ENCODE measurements at regions of chr3 and their contacts with region 1.

Region 1: DNA sequence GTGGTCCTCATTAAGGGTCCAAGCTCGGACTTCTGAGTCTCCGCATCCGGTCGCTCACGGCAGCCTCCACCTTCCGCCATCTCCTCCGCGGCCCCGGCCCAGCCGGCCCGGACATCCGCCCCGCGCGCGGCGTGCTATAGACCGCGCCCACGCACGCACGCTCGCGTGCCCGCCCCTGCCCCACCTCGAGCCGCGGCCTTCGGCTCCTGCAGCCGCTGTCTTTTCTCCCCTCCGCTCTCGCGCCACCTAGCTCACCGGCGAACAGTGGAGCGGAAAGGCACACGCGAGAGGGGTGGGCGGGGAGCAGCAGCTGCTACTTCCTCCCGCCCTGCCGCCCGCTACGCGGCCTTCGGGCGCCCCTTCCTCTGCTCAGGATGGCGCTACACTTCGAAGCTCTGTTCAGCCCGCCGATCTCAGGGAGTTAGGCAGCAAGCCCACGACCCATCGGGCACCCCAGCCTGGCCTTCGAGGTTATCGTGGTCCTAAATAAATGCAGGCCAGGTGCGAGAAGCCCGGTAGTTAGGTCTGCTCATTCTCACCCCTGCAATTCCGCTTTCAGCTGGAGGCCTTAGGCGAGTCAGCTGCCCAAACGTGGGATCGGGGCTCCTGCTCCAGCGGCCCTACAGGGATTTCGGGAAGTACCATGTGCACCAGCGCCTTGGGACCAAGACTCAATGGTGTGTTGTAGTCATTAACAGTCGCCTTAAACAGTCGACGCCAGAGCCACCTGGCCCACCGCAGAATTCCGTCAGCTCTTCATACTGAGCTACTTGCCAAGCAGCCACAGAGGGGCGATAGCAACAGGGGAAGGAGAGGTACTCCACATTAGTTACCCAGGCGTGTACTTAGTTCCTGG is at the start of gene USP4:
- DNase-seq: peak; percentile 87
- ATAC-seq: peak; percentile 96
- H3K4me3 ChIP-seq: peak within 1 kb of the TSS; percentile 87
- H3K27ac ChIP-seq: peak within 1 kb of the TSS; percentile 93
- H3K4me1 ChIP-seq: peaks cover 11% of the 10 kb centered on the region; the same call in 1 of the 2 replicates
- H3K27me3 ChIP-seq: no peaks in the 10 kb centered on the region
- CTCF ChIP-seq: peak; percentile 62
- POLR2A ChIP-seq: peak; percentile 71; the same call in 1 of the 2 replicates
- RAD21 ChIP-seq: peak; percentile 75
- total RNA-seq, gene USP4: 28.6 and 29.9 TPM in 2 replicates

Region 2: GRCh38 chr3:49158108-49158709 is 182.0 kb before region 1 on chr3:
- CTCF ChIA-PET with region 1: no interaction called
- POLR2A ChIA-PET with region 1: no interaction called
- dilution Hi-C with region 1: no loop called
- in situ Hi-C with region 1: no loop called
- intact Hi-C with region 1: no loop called
- DNase-seq: no peak
- ATAC-seq: no peak; the same call in 1 of the 2 replicates
- H3K4me3 ChIP-seq: no peak overlapping the region
- H3K27ac ChIP-seq: no peak overlapping the region
- H3K4me1 ChIP-seq: no peaks in the 10 kb centered on the region
- H3K27me3 ChIP-seq: no peaks in the 10 kb centered on the region
- CTCF ChIP-seq: 0 out of 2 replicates have a peak, but pooled peaks have one; percentile 6
- POLR2A ChIP-seq: no peak; the same call in 1 of the 2 replicates
- RAD21 ChIP-seq: no peak

Region 3: DNA sequence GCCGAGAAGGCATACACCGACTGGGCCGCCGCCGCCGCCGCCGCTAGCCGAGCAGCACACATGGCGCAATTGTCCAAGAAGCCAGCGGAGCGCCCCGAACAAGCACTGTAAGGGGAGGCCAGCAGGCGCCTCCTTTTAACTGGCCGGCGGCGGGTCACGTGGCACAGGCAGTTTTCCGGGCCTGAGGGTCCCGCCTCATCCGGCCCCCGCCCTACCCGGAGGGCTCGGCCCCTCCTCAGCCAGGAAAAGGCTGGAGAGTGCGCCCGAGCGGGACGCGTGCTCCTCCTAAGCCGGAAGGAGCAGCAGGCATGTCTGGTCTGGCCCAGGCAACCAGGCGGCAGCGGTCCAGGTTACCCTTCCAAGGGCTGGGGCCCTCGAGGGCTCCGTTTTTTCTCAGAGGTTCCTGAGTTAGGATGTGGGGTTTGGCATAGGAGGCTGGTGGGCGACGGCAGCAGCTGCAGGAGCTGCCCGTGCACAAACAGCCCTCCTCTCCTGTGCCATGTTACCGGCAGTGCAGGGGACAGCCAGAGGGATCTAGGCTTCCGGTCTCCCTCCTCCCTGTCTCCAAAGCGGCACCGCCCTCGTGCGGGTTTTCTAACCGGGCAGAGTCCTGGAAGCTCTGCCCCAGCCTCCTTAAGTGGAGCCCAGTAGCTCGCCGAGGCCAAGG is 18.2 kb after region 1 on chr3 and contains the start of gene GPX1:
- CTCF ChIA-PET with region 1: interaction called, 5 read pairs
- POLR2A ChIA-PET with region 1: no interaction called
- dilution Hi-C with region 1: no loop called
- in situ Hi-C with region 1: no loop called
- intact Hi-C with region 1: loop called (anchors 1 kb)
- DNase-seq: peak; percentile 94
- ATAC-seq: peak; percentile 83
- H3K4me3 ChIP-seq: peak within 1 kb of the TSS; percentile 67
- H3K27ac ChIP-seq: peak within 1 kb of the TSS; percentile 99
- H3K4me1 ChIP-seq: peaks cover 24% of the 10 kb centered on the region
- H3K27me3 ChIP-seq: no peaks in the 10 kb centered on the region
- CTCF ChIP-seq: no peak
- POLR2A ChIP-seq: peak; percentile 88
- RAD21 ChIP-seq: no peak
- total RNA-seq, gene GPX1: 126 and 128 TPM in 2 replicates

Region 4: DNA sequence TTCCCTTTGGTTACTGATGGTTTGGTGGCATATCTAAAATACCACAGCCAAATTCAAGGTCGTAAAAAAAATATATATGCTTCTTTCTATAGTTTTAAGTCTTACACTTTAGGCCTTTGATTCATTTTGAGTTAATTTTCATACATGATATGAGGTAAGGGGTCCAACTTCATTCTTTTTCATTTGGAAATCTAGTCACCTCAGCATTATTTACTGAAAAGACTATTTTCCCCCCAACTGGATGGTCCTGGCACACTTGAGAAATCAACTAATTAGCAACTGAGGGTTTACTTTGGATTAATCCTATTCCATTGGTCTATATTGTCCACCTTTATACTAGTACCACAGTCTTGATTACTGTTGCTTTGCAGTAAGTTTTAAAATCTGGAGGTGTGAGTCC is 45.4 kb after region 1 on chr3:
- CTCF ChIA-PET with region 1: no interaction called
- POLR2A ChIA-PET with region 1: no interaction called
- dilution Hi-C with region 1: no loop called
- in situ Hi-C with region 1: no loop called
- intact Hi-C with region 1: loop called (anchors 1 kb)
- DNase-seq: no peak
- ATAC-seq: no peak
- H3K4me3 ChIP-seq: no peak overlapping the region
- H3K27ac ChIP-seq: no peak overlapping the region
- H3K4me1 ChIP-seq: peaks cover 10% of the 10 kb centered on the region
- H3K27me3 ChIP-seq: no peaks in the 10 kb centered on the region
- CTCF ChIP-seq: no peak
- POLR2A ChIP-seq: no peak
- RAD21 ChIP-seq: no peak

Region 5: DNA sequence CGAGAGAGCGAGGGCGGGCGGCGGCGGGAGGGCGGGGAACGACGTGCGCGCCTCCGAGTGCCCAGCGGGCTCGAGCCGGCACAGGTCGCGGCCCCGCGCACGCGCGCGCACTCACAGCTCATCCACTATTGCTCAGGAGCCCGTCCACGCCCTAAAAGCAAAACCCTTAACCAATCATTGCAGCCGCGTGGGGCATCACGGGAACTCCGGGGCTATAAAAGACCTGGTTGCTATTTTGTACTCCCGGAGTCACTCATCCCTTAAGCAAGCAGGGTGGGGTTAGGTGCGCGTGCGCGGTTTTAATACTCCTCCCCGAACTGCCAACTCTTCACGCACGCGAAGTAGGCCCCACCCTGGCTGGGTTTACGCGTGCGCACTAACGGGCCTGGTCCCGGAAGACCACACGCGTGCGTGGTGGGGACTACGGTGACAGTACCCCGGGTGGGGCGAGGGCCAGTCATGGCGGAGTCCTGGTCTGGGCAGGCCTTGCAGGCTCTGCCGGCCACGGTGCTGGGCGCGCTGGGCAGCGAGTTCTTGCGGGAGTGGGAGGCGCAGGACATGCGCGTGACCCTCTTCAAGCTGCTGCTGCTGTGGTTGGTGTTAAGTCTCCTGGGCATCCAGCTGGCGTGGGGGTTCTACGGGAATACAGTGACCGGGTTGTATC is 71.9 kb after region 1 on chr3 and contains the starts of genes RHOA and TCTA:
- CTCF ChIA-PET with region 1: no interaction called
- POLR2A ChIA-PET with region 1: no interaction called
- dilution Hi-C with region 1: no loop called
- in situ Hi-C with region 1: no loop called
- intact Hi-C with region 1: loop called (anchors 2 kb)
- DNase-seq: peak; percentile 100
- ATAC-seq: peak; percentile 91
- H3K4me3 ChIP-seq: peak within 1 kb of the TSS; percentile 78
- H3K27ac ChIP-seq: peak within 1 kb of the TSS; percentile 96
- H3K4me1 ChIP-seq: peaks cover 9% of the 10 kb centered on the region
- H3K27me3 ChIP-seq: no peaks in the 10 kb centered on the region
- CTCF ChIP-seq: no peak
- POLR2A ChIP-seq: peak; percentile 97
- RAD21 ChIP-seq: no peak
- total RNA-seq, gene RHOA: 879 and 897 TPM in 2 replicates
- total RNA-seq, gene TCTA: 12.8 and 15.1 TPM in 2 replicates

Region 6: GRCh38 chr3:49445381-49445780 is 105.2 kb after region 1 on chr3:
- CTCF ChIA-PET with region 1: interaction called, 6 read pairs
- POLR2A ChIA-PET with region 1: interaction called, 7 read pairs
- dilution Hi-C with region 1: no loop called
- in situ Hi-C with region 1: loop called (anchors 5 kb)
- intact Hi-C with region 1: loop called (anchors 1 kb)
- DNase-seq: no peak
- ATAC-seq: no peak
- H3K4me3 ChIP-seq: no peak overlapping the region
- H3K27ac ChIP-seq: no peak overlapping the region
- H3K4me1 ChIP-seq: peaks cover 4% of the 10 kb centered on the region
- H3K27me3 ChIP-seq: no peaks in the 10 kb centered on the region
- CTCF ChIP-seq: no peak
- POLR2A ChIP-seq: no peak
- RAD21 ChIP-seq: no peak

Region 7: DNA sequence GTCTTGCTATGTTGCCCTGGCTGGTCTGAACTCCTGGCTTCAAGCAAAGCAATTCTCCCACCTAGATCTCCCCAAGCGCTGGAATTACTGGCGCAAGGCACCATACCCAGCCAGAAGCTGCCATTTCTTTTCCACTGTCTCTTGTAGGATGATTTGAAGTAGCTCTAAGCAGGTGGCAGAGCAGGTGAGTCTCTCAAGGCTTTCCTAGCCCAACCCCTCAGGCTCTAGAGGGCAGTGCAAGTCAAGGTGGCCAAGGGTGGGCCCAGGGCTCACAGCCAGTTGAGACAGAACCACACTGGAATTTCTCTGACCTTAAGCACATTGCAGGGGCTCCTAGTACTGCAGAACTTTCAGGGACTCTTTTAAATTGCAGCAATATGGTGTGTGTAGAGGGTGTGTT is 114.3 kb after region 1 on chr3:
- CTCF ChIA-PET with region 1: interaction called, 3 read pairs
- POLR2A ChIA-PET with region 1: no interaction called
- dilution Hi-C with region 1: no loop called
- in situ Hi-C with region 1: loop called (anchors 5 kb)
- intact Hi-C with region 1: loop called (anchors 1 kb)
- DNase-seq: no peak
- ATAC-seq: no peak
- H3K4me3 ChIP-seq: no peak overlapping the region
- H3K27ac ChIP-seq: no peak overlapping the region
- H3K4me1 ChIP-seq: peaks cover 8% of the 10 kb centered on the region
- H3K27me3 ChIP-seq: no peaks in the 10 kb centered on the region
- CTCF ChIP-seq: no peak
- POLR2A ChIP-seq: no peak
- RAD21 ChIP-seq: no peak; the same call in 1 of the 2 replicates

Measured in IMR-90 (cell line).